Activated T-helper 2 cell treated with anti-CD3 and anti-CD28 coated beads, Interferon-gamma antibody, Interleukin-2, Interleukin-4, amounts not matched to agents 10 μg/mL and 5 μg/mL and 100 μg/mL, durations not matched to agents 14 hours and 24 hours and 36 hours (primary cell): ENCODE measurements at regions of chr15 and their contacts with region 1.

Region 1: GRCh38 chr15:70488002-70488605 is 275.3 kb downstream of the UACA start:
- DNase-seq: peak; percentile 65
- H3K4me3 Mint-ChIP-seq: no peak overlapping the region
- H3K27ac Mint-ChIP-seq: no peak overlapping the region
- H3K4me1 Mint-ChIP-seq: peaks cover 68% of the 10 kb centered on the region
- H3K27me3 Mint-ChIP-seq: peaks cover 41% of the 10 kb centered on the region

Region 2: DNA sequence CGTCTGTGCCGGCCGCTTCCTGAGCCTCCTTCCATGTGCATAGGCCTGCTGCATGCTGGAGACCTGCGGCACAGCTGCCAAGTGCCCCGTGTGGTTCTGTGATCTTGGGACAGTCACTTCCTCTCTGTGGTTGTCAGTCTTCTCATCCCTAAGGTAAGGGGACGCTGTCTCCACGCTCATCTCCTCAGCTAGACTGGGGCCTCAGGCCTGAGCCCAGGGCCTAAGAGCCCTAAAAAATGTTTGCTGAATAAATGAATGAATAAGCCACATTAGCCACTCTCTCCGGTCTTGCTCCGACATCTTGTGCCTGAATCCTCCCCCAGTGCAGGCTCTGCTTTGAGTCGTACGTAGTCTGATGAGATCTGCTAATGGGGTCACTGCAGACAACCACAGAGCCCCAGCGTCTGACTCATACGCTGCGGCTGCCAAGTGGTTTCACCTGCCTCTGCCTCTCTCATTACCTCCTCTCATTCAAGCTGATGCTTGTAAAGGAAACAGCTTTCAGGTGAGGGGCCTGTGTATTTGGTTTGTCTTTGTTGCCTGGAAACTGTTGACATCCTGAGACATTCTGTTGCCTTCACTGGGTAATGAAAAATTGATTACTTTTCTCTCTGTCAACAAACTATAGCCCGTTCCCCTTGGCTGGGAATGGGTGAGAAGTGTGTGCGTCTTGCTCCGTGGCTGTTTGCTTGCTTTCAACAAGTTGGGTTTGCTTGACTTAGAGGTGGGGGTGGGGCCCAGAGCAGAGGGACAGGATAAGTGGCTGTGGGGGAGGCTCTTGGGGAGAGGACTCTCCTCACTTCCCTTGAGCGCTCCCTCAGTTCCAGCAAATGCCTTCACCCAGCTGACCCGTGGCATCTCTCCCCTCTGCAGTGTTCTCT is 1019.6 kb before region 1 on chr15:
- intact Hi-C with region 1: loop called (anchors 2 kb)
- DNase-seq: peak; percentile 78
- H3K4me3 Mint-ChIP-seq: peak overlapping the region; percentile 5
- H3K27ac Mint-ChIP-seq: peak overlapping the region; percentile 75
- H3K4me1 Mint-ChIP-seq: peaks cover 22% of the 10 kb centered on the region
- H3K27me3 Mint-ChIP-seq: peaks cover 30% of the 10 kb centered on the region

Region 3: GRCh38 chr15:69755551-69756310 is 732.4 kb before region 1 on chr15:
- intact Hi-C with region 1: loop called (anchors 1 kb)
- DNase-seq: peak; percentile 84
- H3K4me3 Mint-ChIP-seq: peak overlapping the region; percentile 34
- H3K27ac Mint-ChIP-seq: peak overlapping the region; percentile 82
- H3K4me1 Mint-ChIP-seq: peaks cover 70% of the 10 kb centered on the region
- H3K27me3 Mint-ChIP-seq: no peaks in the 10 kb centered on the region

Region 4: GRCh38 chr15:70140543-70141375 is 347.3 kb before region 1 on chr15:
- intact Hi-C with region 1: loop called (anchors 2 kb)
- DNase-seq: no peak
- H3K4me3 Mint-ChIP-seq: no peak overlapping the region
- H3K27ac Mint-ChIP-seq: peak overlapping the region; percentile 40
- H3K4me1 Mint-ChIP-seq: peaks cover 34% of the 10 kb centered on the region
- H3K27me3 Mint-ChIP-seq: peaks cover 56% of the 10 kb centered on the region

Region 5: GRCh38 chr15:70504299-70504951 is 16.3 kb after region 1 on chr15:
- intact Hi-C with region 1: loop called (anchors 1 kb)
- DNase-seq: no peak
- H3K4me3 Mint-ChIP-seq: peak overlapping the region; percentile 14
- H3K27ac Mint-ChIP-seq: peak overlapping the region; percentile 64
- H3K4me1 Mint-ChIP-seq: peaks cover 63% of the 10 kb centered on the region
- H3K27me3 Mint-ChIP-seq: peaks cover 19% of the 10 kb centered on the region

Region 6: GRCh38 chr15:70670680-70671079 is 182.6 kb after region 1 on chr15:
- intact Hi-C with region 1: loop called (anchors 1 kb)
- DNase-seq: no peak
- H3K4me3 Mint-ChIP-seq: no peak overlapping the region
- H3K27ac Mint-ChIP-seq: no peak overlapping the region
- H3K4me1 Mint-ChIP-seq: peaks cover 21% of the 10 kb centered on the region
- H3K27me3 Mint-ChIP-seq: peaks cover 10% of the 10 kb centered on the region